Activated T-helper 1 cell treated with anti-CD3 and anti-CD28 coated beads, Interleukin-12 subunit alpha, Interleukin-12 subunit beta, Interleukin-2, Interleukin-4 antibody, amounts not matched to agents 30 ng/mL and 10 ng/mL and 1 ng/mL, durations not matched to agents 14 hours and 24 hours and 36 hours (primary cell): ENCODE measurements at regions of chr2 and their contacts with region 1.

Region 1: GRCh38 chr2:168246483-168247340 is 683 bp downstream of the STK39 start:
- DNase-seq: peak; percentile 76
- H3K4me3 Mint-ChIP-seq: peak overlapping the region; percentile 95
- H3K27ac Mint-ChIP-seq: peak overlapping the region; percentile 95
- H3K4me1 Mint-ChIP-seq: peaks cover 38% of the 10 kb centered on the region
- H3K27me3 Mint-ChIP-seq: peaks cover 2% of the 10 kb centered on the region

Region 2: DNA sequence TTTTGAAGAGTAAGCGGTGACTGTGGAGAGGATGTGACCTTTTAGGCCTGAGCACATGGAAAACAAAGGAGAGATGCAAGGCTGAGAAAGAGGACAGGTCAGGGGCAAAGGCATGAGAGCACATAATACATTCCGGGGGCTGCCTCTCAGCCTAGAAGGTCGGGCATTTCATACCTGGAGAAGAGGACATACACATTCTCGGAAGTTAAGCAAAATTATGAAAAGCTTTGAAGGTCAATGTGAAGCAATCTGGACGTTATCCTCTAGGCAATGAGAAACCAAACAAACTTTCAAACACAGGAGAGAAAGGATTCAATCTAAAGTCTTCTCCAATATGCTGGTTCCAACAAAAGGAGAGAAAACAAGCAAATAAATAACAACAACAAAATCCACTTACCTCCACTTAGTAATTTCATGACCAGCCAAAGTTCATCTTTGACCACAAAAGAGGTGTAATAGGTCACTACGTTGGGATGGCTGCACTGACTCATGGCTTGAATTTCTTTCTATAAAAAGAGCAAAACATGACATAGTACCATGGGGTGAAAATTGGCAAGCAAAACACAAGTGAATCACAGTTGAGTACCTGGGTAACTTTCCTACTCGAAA is 79.7 kb before region 1 on chr2:
- intact Hi-C with region 1: loop called (anchors 2 kb)
- DNase-seq: no peak
- H3K4me3 Mint-ChIP-seq: peak overlapping the region; percentile 58
- H3K27ac Mint-ChIP-seq: peak overlapping the region; percentile 64
- H3K4me1 Mint-ChIP-seq: peaks cover 30% of the 10 kb centered on the region
- H3K27me3 Mint-ChIP-seq: no peaks in the 10 kb centered on the region

Region 3: DNA sequence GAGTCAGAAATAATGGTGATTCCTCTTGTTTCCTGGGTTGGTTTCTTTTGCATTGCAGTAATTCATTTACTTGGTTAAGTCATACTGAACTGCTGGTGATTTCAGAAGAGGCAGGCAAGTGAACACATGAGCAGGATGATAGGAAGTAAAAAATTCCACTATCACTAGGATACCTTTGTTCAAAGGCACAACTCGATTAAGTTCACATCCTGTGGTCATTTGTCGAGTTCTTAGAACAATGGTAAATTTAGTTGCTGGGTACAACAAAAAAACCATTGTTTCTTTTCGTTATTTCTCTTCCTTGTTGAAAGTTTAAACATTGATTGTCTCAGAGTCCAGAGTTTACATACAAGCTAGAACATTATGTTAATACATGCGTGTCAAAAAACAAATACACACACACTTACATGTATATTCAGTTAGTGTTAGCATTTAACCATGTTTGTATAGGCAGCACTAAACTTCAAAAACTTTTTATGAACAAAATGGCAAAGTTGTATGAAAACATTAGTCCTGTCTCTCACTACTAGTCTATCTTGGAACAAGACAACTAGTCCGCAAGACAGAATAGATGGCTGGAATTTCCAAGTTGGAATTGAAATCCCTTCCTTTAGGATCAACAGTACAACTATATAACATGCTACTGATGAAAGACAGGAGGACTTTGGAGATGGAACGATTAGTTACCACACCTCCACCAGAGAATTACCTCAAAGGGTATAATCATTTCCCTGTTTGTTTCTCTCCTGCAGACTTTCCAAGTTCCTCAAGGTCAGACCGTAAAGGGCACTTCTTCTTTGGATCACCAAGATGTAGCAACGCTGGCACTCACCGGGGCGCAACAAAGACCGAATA is 25.5 kb before region 1 on chr2:
- intact Hi-C with region 1: loop called (anchors 2 kb)
- DNase-seq: no peak
- H3K4me3 Mint-ChIP-seq: no peak overlapping the region
- H3K27ac Mint-ChIP-seq: no peak overlapping the region
- H3K4me1 Mint-ChIP-seq: peaks cover 24% of the 10 kb centered on the region
- H3K27me3 Mint-ChIP-seq: no peaks in the 10 kb centered on the region

Region 4: DNA sequence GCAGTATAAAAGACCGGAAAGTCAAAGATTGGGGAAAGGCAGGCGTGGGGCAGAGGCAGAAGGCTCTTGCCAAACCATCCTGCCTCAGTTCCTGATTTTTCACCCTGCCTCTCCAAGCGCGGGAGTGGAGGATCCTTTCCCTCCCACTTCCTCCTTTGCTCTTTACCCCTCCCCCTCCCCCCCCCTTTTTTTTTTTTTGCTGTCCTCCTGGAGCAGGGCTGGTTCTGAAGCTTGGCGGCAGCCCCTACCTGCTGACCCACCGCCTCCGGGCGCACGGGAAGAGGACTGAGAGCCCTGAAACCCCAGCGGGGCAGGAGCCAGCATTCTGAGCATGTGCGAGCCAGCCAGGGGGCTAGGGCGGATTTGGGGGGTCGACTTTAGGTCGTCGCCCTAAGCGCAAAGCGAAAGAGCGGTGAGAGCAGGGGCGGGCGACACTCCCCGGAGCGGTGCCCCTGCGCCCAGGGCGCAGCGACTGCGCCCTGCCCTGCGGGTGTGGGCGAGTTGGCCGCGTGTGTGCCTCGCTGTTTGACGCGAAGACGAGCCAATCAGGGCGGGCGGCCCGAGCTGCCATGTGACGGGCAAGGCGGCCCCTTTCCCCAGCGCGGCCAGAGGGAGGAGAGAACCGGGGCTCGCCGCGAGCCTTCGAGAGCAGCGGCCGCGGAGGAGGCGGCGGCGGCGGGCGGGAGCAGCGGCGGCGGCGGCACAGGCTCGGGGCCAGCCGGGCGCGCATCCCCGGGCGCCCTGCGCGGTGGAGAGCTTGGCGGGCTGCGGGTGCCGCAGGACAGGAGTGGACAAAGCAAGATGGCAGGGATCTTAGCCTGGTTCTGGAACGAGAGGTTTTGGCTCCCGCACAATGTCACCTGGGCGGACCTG is 209.2 kb after region 1 on chr2 and contains the start of gene CERS6:
- intact Hi-C with region 1: loop called (anchors 5 kb)
- DNase-seq: peak; percentile 85
- H3K4me3 Mint-ChIP-seq: peak within 1 kb of the TSS; percentile 93
- H3K27ac Mint-ChIP-seq: peak within 1 kb of the TSS; percentile 80
- H3K4me1 Mint-ChIP-seq: peaks cover 37% of the 10 kb centered on the region
- H3K27me3 Mint-ChIP-seq: peaks cover 3% of the 10 kb centered on the region
- total RNA-seq, gene CERS6: 27.0 and 27.1 TPM in 2 replicates

Region 5: DNA sequence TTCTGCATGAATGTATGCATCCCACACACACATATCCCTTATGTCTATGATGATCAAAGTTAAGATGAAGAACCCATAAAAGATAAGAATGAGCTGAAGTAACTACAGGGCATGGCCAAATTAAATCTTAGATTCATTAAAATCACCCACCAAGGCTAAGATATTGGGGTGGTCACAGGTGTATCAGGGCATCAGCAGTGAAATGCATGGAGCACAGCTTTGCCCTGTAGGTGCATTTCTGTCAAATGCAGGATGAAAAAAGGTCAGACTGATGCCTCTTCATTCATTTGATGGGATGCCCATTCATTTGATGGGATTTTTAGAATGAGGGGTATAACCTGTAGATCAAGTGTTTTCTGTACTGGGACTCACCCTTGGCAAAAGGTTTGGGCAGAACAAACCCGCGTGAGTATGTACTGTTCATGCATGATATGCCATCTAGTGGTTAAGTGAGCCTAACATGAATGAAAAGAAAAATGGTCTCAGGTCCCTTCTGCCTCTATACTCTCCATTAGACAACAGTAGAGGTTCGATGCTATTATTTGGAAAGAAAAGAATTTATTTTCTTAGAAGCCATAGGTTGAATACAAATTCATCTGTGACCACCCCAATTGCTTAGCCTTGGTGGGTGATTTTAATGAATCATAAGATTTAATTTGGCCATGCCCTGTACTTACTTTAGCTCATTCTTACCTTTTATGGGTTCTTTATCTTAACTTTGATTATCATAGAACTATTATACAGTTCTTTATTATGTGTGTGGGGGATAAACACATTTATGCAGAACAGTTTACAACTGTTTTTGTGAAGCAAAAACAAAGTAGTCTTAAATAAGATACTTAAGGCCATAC is 512.5 kb after region 1 on chr2:
- intact Hi-C with region 1: loop called (anchors 5 kb)
- DNase-seq: no peak
- H3K4me3 Mint-ChIP-seq: no peak overlapping the region
- H3K27ac Mint-ChIP-seq: no peak overlapping the region
- H3K4me1 Mint-ChIP-seq: peaks cover 15% of the 10 kb centered on the region
- H3K27me3 Mint-ChIP-seq: no peaks in the 10 kb centered on the region

Region 6: DNA sequence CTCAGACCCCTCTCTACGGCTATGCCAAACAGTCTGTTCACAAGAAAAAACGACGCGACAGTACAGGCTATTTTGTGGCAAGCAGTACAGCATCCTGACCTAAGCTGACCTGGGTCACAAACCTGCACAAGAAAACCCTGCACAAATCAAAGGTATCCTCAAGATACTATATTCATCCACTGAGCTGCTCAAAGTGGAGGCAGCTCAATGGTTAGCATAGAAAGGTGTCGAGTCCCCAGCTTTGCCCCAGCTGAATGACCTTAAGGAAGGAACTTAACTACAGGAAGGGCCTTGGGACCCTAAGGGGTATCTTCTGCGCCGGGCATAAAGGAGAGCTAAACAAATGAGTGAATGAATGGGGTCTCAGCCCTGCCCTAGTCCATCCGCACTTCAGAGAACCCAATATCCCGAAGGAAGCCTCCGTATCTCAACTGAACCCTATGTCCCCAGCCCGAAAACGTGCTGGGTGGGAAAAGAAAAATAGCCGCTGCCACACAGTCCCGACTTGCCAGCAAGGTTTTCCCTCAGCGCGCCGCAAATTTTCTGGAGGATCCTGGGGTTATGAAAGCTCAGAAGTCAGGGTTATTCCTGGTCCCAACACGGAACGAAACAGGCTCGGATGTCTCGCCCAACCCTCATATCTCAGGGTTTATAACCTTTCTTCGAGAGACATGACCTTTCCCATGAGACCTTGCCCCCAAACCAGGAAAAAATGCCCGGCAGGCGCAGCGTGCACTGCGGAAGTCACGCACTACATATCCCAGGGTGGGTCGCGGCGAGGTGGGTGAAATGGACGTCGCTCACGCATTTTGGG is 1326.7 kb after region 1 on chr2 and contains the start of gene FASTKD1:
- intact Hi-C with region 1: loop called (anchors 5 kb)
- DNase-seq: peak; percentile 82
- H3K4me3 Mint-ChIP-seq: peak within 1 kb of the TSS; percentile 99
- H3K27ac Mint-ChIP-seq: peak within 1 kb of the TSS; percentile 90
- H3K4me1 Mint-ChIP-seq: peaks cover 32% of the 10 kb centered on the region
- H3K27me3 Mint-ChIP-seq: no peaks in the 10 kb centered on the region
- total RNA-seq, gene FASTKD1: 50.3 and 50.4 TPM in 2 replicates